GM12878 (cell line): ENCODE measurements at regions of chr2 and their contacts with region 1.

Region 1: GRCh38 chr2:47767880-47768609 is 14.9 kb upstream of the MSH6 start:
- DNase-seq: no peak
- ATAC-seq: peak; percentile 96
- H3K4me3 ChIP-seq: no peak overlapping the region
- H3K27ac ChIP-seq: no peak overlapping the region
- H3K4me1 ChIP-seq: no peaks in the 10 kb centered on the region
- H3K27me3 ChIP-seq: no peaks in the 10 kb centered on the region
- CTCF ChIP-seq: peak; percentile 97 to 100 (median 97); a peak in 5 of 6 replicates
- EP300 ChIP-seq: no peak
- POLR2A ChIP-seq: no peak
- RAD21 ChIP-seq: peak; percentile 99

Region 2: GRCh38 chr2:47334356-47335136 is 433.5 kb before region 1 on chr2:
- CTCF ChIA-PET with region 1: interaction called, 98 read pairs
- POLR2A ChIA-PET with region 1: no interaction called
- RAD21 ChIA-PET with region 1: interaction called, 74 read pairs
- SMC1A ChIA-PET with region 1: interaction called, 62 read pairs
- in situ Hi-C with region 1: loop called (anchors 5 kb)
- intact Hi-C with region 1: loop called (anchors 1 kb)
- DNase-seq: no peak
- ATAC-seq: peak; percentile 35
- H3K4me3 ChIP-seq: peak overlapping the region; percentile 23; the same call in 1 of the 2 replicates
- H3K27ac ChIP-seq: no peak overlapping the region; the same call in 1 of the 2 replicates
- H3K4me1 ChIP-seq: peaks cover 25% of the 10 kb centered on the region
- H3K27me3 ChIP-seq: no peaks in the 10 kb centered on the region
- CTCF ChIP-seq: no peak
- EP300 ChIP-seq: no peak
- POLR2A ChIP-seq: no peak
- RAD21 ChIP-seq: no peak

Region 3: GRCh38 chr2:47402805-47403608 is 365.0 kb before region 1 on chr2 and contains the start of gene MSH2:
- CTCF ChIA-PET with region 1: interaction called, 10 read pairs
- POLR2A ChIA-PET with region 1: no interaction called
- RAD21 ChIA-PET with region 1: interaction called, 8 read pairs
- SMC1A ChIA-PET with region 1: interaction called, 4 read pairs
- in situ Hi-C with region 1: no loop called
- intact Hi-C with region 1: no loop called
- DNase-seq: peak; percentile 86
- ATAC-seq: peak; percentile 97
- H3K4me3 ChIP-seq: peak within 1 kb of the TSS; percentile 83
- H3K27ac ChIP-seq: peak within 1 kb of the TSS; percentile 85
- H3K4me1 ChIP-seq: peaks cover 6% of the 10 kb centered on the region
- H3K27me3 ChIP-seq: no peaks in the 10 kb centered on the region; a peak in 1 of 4 replicates
- CTCF ChIP-seq: no peak
- EP300 ChIP-seq: 0 out of 4 replicates have a peak, but pooled peaks of 1 of the 2 experiments have one; percentile 17
- POLR2A ChIP-seq: peak; percentile 88
- RAD21 ChIP-seq: no peak
- polyA plus RNA-seq, gene MSH2: 24.3 to 31.3 TPM

Region 4: DNA sequence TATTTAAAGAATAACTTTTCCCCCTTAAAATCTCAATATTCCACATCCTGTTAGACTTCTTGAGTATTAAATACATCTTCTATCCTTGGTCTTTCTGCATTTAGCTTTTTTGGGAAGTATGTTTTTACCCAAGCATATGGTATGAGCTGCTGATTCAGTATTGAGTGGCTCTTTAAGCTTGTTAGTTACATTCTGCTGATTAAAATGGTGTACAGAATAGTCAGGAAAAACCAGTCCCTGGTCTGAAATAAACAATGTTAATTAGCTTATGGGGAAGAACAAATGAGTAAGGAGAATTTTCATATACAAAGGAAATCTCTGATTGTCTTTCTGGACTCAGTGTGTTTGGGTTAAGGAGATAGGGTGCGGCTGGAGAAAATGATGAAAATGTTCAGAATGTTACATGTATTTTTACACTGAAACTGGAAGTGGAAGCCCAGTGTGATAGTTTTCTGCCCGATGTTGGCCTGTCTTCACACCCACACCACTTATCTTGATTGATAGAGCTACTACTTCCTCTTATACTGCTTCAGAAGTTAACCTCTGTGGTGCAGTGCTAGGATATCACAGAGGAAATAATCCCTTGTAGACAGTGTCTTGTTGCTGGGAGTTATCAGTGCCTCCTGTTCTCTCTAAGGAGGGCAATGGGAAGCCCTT is 281.1 kb before region 1 on chr2:
- CTCF ChIA-PET with region 1: interaction called, 22 read pairs
- POLR2A ChIA-PET with region 1: no interaction called
- RAD21 ChIA-PET with region 1: interaction called, 10 read pairs
- SMC1A ChIA-PET with region 1: interaction called, 7 read pairs
- in situ Hi-C with region 1: no loop called
- intact Hi-C with region 1: no loop called
- DNase-seq: peak; percentile 23
- ATAC-seq: peak; percentile 99
- H3K4me3 ChIP-seq: no peak overlapping the region
- H3K27ac ChIP-seq: peak overlapping the region; percentile 13; the same call in 1 of the 2 replicates
- H3K4me1 ChIP-seq: peaks cover 14% of the 10 kb centered on the region
- H3K27me3 ChIP-seq: no peaks in the 10 kb centered on the region
- CTCF ChIP-seq: no peak
- EP300 ChIP-seq: 0 out of 4 replicates have a peak, but pooled peaks of 1 of the 2 experiments have one; percentile 33
- POLR2A ChIP-seq: no peak
- RAD21 ChIP-seq: no peak

Region 5: GRCh38 chr2:47664817-47665216 is 103.2 kb before region 1 on chr2:
- CTCF ChIA-PET with region 1: interaction called, 11 read pairs
- POLR2A ChIA-PET with region 1: no interaction called
- RAD21 ChIA-PET with region 1: no interaction called
- SMC1A ChIA-PET with region 1: interaction called, 4 read pairs
- in situ Hi-C with region 1: no loop called
- intact Hi-C with region 1: no loop called
- DNase-seq: no peak
- ATAC-seq: peak; percentile 40; the same call in 2 of the 3 replicates
- H3K4me3 ChIP-seq: no peak overlapping the region
- H3K27ac ChIP-seq: no peak overlapping the region
- H3K4me1 ChIP-seq: peaks cover 2% of the 10 kb centered on the region; the same call in 1 of the 2 replicates
- H3K27me3 ChIP-seq: no peaks in the 10 kb centered on the region
- CTCF ChIP-seq: peak; percentile 23 to 49 (median 34); a peak in 5 of 6 replicates
- EP300 ChIP-seq: no peak
- POLR2A ChIP-seq: no peak
- RAD21 ChIP-seq: 0 out of 2 replicates have a peak, but pooled peaks have one; percentile 31

Region 6: DNA sequence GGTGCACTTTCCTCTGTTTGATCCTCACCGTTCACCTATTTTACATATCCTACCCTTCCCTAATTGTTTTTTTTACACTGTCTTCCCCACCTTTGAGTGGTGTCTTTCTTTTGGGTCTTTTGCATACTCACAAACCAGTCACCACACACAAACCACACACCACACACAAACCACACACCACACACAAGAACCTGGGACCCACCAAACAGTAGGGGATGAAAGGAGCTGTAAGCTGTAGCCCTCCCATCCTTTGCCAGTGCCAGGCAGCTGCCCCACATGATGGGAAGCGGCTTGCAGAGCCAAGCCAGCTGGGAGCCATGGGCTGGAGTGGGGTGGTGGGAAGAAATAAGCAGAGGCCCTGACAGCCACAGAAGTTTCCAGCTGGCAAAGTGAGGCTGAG is 24.0 kb before region 1 on chr2:
- CTCF ChIA-PET with region 1: interaction called, 13 read pairs
- POLR2A ChIA-PET with region 1: interaction called, 3 read pairs
- RAD21 ChIA-PET with region 1: interaction called, 4 read pairs
- SMC1A ChIA-PET with region 1: interaction called, 6 read pairs
- in situ Hi-C with region 1: no loop called
- intact Hi-C with region 1: no loop called
- DNase-seq: no peak
- ATAC-seq: no peak
- H3K4me3 ChIP-seq: no peak overlapping the region
- H3K27ac ChIP-seq: no peak overlapping the region
- H3K4me1 ChIP-seq: peaks cover 8% of the 10 kb centered on the region; the same call in 1 of the 2 replicates
- H3K27me3 ChIP-seq: no peaks in the 10 kb centered on the region
- CTCF ChIP-seq: no peak
- EP300 ChIP-seq: no peak
- POLR2A ChIP-seq: no peak
- RAD21 ChIP-seq: no peak

Region 7: DNA sequence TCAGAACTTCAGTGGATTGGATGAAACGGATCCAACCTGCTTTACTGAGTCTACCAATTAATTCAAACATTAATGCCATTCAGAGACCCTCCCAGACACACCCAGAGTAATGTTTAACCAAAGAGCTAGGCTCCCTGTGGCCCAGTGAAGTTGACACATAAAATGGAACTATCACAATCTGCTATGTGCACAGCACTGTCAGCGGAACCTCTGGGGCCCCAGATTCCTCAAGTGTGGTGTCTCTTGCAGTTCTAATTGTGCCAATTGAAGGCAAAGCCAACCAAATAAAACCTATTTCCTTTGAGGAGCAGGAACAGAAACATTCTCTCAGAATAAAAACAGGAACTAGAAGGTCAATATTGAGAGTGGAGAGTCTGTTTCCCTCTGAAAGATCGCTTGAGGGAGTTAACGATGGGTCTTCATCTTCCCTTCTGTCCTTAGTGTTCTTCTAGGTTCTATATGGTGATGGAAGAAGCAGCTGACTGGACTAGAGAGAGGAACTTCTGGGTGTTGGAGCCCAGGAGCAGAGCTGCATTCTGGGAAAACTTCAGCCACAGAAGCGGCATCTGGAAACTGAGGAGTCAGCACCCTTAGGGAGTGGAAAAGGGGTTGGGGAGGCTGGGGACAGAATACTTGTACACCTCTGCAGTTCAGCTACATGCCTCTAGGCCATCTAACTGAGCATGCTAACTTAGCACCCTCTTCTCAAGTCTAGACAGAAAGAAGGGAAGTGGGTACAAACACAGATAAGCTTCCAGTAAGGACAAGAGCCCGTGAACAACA is 312.7 kb after region 1 on chr2:
- CTCF ChIA-PET with region 1: no interaction called
- POLR2A ChIA-PET with region 1: no interaction called
- RAD21 ChIA-PET with region 1: no interaction called
- SMC1A ChIA-PET with region 1: no interaction called
- in situ Hi-C with region 1: no loop called
- intact Hi-C with region 1: no loop called
- DNase-seq: no peak
- ATAC-seq: peak; percentile 75
- H3K4me3 ChIP-seq: no peak overlapping the region
- H3K27ac ChIP-seq: no peak overlapping the region
- H3K4me1 ChIP-seq: no peaks in the 10 kb centered on the region
- H3K27me3 ChIP-seq: no peaks in the 10 kb centered on the region; a peak in 1 of 4 replicates
- CTCF ChIP-seq: peak in 2 of 3 experiments; percentile 15 to 18; a peak in 1 of 6 replicates
- EP300 ChIP-seq: no peak
- POLR2A ChIP-seq: no peak
- RAD21 ChIP-seq: no peak

Region 8: DNA sequence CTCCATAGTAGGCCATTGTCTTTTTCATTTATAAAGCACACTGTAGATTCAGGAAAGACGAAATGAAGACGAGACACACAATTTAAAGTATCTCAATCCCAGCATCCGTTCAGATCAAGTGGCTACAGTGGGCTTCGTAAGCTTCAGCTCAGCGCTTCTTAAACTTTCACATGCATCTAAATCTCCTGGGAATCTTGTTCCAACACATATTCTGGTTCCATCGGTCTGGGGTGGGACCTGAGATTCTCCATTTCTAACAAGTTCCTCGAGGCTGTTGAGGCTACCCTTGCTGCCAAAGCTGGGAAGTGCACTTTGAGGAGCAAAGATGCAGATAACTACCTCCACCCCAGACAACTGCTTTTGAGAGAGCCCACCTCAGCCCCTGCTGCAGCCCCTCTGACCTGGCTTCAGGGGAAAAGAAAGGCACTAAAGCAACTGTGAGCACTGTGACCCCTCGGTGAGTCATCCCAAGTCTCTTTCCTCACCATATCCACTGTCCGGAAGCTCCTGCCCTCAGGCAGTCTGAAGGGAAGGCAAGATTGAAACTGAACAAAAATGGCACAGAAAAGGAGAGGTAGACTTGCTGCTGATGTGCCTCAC is 339.4 kb after region 1 on chr2:
- CTCF ChIA-PET with region 1: interaction called, 14 read pairs
- POLR2A ChIA-PET with region 1: no interaction called
- RAD21 ChIA-PET with region 1: interaction called, 6 read pairs
- SMC1A ChIA-PET with region 1: interaction called, 6 read pairs
- in situ Hi-C with region 1: no loop called
- intact Hi-C with region 1: no loop called
- DNase-seq: no peak
- ATAC-seq: no peak
- H3K4me3 ChIP-seq: no peak overlapping the region
- H3K27ac ChIP-seq: no peak overlapping the region
- H3K4me1 ChIP-seq: peaks cover 8% of the 10 kb centered on the region
- H3K27me3 ChIP-seq: no peaks in the 10 kb centered on the region
- CTCF ChIP-seq: no peak
- EP300 ChIP-seq: no peak
- POLR2A ChIP-seq: no peak
- RAD21 ChIP-seq: no peak